ENCODE measurements at regions of chr20 and their contacts with region 1.

Region 1: GRCh38 chr20:25399037-25399430 is 8.4 kb upstream of the ABHD12 start:
- DNase-seq: no peak
- ATAC-seq: peak; percentile 92
- H3K4me3 Mint-ChIP-seq: no peak overlapping the region
- H3K27ac Mint-ChIP-seq: no peak overlapping the region
- H3K4me1 Mint-ChIP-seq: peaks cover 20% of the 10 kb centered on the region
- H3K27me3 Mint-ChIP-seq: peaks cover 17% of the 10 kb centered on the region
- CTCF ChIP-seq: 0 out of 2 replicates have a peak, but pooled peaks have one; percentile 19

Region 2: GRCh38 chr20:25247956-25248785 is 150.9 kb before region 1 on chr20 and contains the start of gene PYGB:
- CTCF ChIA-PET with region 1: interaction called, 23 read pairs
- POLR2A ChIA-PET with region 1: no interaction called
- DNase-seq: peak; percentile 82
- ATAC-seq: peak; percentile 73
- H3K4me3 Mint-ChIP-seq: peak within 1 kb of the TSS; percentile 88
- H3K27ac Mint-ChIP-seq: peak within 1 kb of the TSS; percentile 94
- H3K4me1 Mint-ChIP-seq: peaks cover 39% of the 10 kb centered on the region
- H3K27me3 Mint-ChIP-seq: peaks cover 9% of the 10 kb centered on the region
- CTCF ChIP-seq: no peak
- total RNA-seq, gene PYGB: 44.5 to 48.5 TPM (median 46.3 TPM) in 3 replicates

Region 3: GRCh38 chr20:25299806-25300205 is 99.2 kb before region 1 on chr20:
- CTCF ChIA-PET with region 1: interaction called, 78 read pairs
- POLR2A ChIA-PET with region 1: no interaction called
- DNase-seq: no peak
- ATAC-seq: no peak
- H3K4me3 Mint-ChIP-seq: no peak overlapping the region
- H3K27ac Mint-ChIP-seq: no peak overlapping the region; the same call in 1 of the 2 replicates
- H3K4me1 Mint-ChIP-seq: peaks cover 25% of the 10 kb centered on the region
- H3K27me3 Mint-ChIP-seq: no peaks in the 10 kb centered on the region
- CTCF ChIP-seq: no peak

Region 4: DNA sequence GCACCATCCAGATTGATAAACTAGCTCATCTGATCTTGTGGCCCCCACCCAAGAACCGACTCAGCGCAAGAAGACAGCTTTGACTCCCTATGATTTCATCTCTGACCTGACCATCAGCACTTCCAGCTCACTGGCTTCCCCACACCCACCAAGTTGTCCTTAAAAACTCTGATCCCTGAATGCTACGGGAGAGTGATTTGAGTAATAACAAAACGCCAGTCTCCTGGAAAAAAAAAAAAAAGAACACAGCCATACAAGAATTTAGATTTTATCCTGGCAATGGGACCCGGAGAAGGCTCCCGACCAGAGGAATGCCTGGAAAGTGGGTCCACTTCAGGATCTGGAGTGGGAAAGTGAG is 71.2 kb before region 1 on chr20:
- CTCF ChIA-PET with region 1: interaction called, 10 read pairs
- POLR2A ChIA-PET with region 1: no interaction called
- DNase-seq: no peak
- ATAC-seq: no peak
- H3K4me3 Mint-ChIP-seq: no peak overlapping the region
- H3K27ac Mint-ChIP-seq: peak overlapping the region; percentile 66
- H3K4me1 Mint-ChIP-seq: peaks cover 36% of the 10 kb centered on the region
- H3K27me3 Mint-ChIP-seq: no peaks in the 10 kb centered on the region
- CTCF ChIP-seq: no peak

Region 5: DNA sequence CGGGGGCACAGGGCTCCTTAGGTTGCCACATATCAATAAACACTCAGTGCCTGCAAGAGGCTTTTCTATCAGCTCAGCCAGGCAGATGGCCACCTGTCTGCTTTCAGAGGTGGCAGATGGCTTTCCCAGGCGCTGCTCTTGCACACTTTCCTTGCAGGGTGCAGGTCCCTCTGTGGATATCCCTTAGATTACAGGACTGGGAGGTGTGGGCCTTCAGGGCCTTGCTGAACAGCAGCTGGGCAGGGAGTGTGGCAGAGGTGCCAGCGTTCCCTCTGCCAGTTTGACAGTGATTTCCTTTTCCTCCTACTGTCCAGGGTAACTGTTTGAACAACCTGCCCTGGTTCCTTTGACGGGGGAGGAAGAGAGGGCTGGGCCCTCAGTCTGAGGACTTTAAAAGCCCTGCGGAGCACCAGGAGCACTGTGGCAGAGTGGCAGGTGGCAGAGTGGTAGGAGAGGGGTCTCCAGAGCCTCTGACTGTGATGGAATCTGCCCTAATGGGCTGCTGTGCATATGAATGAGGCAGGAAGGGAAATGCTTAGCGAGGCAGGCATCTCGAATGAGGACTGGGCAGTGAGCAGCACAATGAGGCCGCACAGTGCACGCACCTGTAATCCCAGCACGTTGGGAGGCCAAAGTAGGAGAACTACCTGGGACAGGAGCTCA is 42.6 kb before region 1 on chr20:
- CTCF ChIA-PET with region 1: interaction called, 12 read pairs
- POLR2A ChIA-PET with region 1: no interaction called
- DNase-seq: peak; percentile 65
- ATAC-seq: peak; percentile 95
- H3K4me3 Mint-ChIP-seq: peak overlapping the region; percentile 22; the same call in 1 of the 2 replicates
- H3K27ac Mint-ChIP-seq: peak overlapping the region; percentile 98
- H3K4me1 Mint-ChIP-seq: peaks cover 75% of the 10 kb centered on the region
- H3K27me3 Mint-ChIP-seq: no peaks in the 10 kb centered on the region
- CTCF ChIP-seq: no peak

Region 6: DNA sequence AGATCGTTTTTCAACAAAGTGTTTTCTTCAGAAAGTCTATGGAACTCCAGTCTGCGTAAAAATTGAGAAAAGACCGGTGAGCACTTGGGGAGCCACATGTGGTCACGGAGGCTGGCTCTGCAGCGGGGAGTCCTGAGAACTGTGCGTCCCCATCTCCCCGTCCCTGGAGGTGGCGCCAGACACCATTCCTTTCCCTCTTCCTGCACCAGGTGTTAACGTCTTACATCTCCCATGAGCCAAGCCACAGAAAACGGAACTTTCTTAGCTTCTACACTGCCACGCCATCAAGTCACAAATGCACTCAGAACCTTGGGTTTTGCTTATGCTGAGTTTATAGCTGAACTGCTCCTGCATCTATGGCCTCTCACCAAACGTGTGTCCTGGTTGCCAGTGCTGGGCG is 71.0 kb after region 1 on chr20:
- CTCF ChIA-PET with region 1: no interaction called
- POLR2A ChIA-PET with region 1: no interaction called
- DNase-seq: peak; percentile 77
- ATAC-seq: peak; percentile 97
- H3K4me3 Mint-ChIP-seq: no peak overlapping the region
- H3K27ac Mint-ChIP-seq: peak overlapping the region; percentile 88
- H3K4me1 Mint-ChIP-seq: peaks cover 3% of the 10 kb centered on the region; the same call in 1 of the 2 replicates
- H3K27me3 Mint-ChIP-seq: no peaks in the 10 kb centered on the region
- CTCF ChIP-seq: peak; percentile 58; the same call in 1 of the 2 replicates

Measured in WTC11 (cell line).